ENCODE measurements at regions of chr5 and their contacts with region 1.

Region 1: GRCh38 chr5:119541716-119542115 is 87.6 kb upstream of the FAM170A start:
- DNase-seq: no peak
- ATAC-seq: no peak
- H3K4me3 ChIP-seq: no peak overlapping the region
- H3K27ac ChIP-seq: no peak overlapping the region
- H3K4me1 ChIP-seq: peaks cover 12% of the 10 kb centered on the region
- H3K27me3 ChIP-seq: no peaks in the 10 kb centered on the region
- CTCF ChIP-seq: no peak
- EP300 ChIP-seq: no peak
- POLR2A ChIP-seq: no peak
- RAD21 ChIP-seq: no peak

Region 2: GRCh38 chr5:119554597-119554996 is 12.9 kb after region 1 on chr5:
- CTCF ChIA-PET with region 1: no interaction called
- POLR2A ChIA-PET with region 1: no interaction called
- RAD21 ChIA-PET with region 1: no interaction called
- SMC1A ChIA-PET with region 1: interaction called, 10 read pairs
- in situ Hi-C with region 1: no loop called
- intact Hi-C with region 1: no loop called
- DNase-seq: no peak
- ATAC-seq: no peak
- H3K4me3 ChIP-seq: no peak overlapping the region
- H3K27ac ChIP-seq: no peak overlapping the region
- H3K4me1 ChIP-seq: no peaks in the 10 kb centered on the region
- H3K27me3 ChIP-seq: no peaks in the 10 kb centered on the region
- CTCF ChIP-seq: no peak
- EP300 ChIP-seq: no peak
- POLR2A ChIP-seq: no peak
- RAD21 ChIP-seq: no peak

Region 3: DNA sequence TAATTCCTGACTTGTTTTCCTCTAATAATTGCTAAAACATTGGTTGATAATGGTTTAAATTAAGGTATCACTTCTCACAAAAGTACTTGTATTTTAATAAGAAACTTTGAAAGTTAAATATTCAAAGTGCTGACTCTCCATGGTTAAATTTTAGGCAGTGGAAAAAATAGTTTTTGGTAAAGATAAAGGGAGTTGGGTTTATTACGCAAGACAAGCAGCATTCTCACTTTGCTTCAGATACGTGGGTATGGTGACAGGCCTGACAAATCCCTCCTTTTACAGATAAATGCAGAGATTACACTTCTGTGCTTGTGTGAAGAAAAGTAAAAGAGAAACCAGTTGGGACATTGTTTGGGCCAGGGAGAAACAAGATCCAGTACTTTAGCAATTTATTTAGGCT is 73.1 kb after region 1 on chr5:
- CTCF ChIA-PET with region 1: no interaction called
- POLR2A ChIA-PET with region 1: no interaction called
- RAD21 ChIA-PET with region 1: no interaction called
- SMC1A ChIA-PET with region 1: no interaction called
- in situ Hi-C with region 1: no loop called
- intact Hi-C with region 1: no loop called
- DNase-seq: no peak
- ATAC-seq: no peak
- H3K4me3 ChIP-seq: no peak overlapping the region
- H3K27ac ChIP-seq: no peak overlapping the region
- H3K4me1 ChIP-seq: no peaks in the 10 kb centered on the region
- H3K27me3 ChIP-seq: no peaks in the 10 kb centered on the region; a peak in 1 of 4 replicates
- CTCF ChIP-seq: no peak
- EP300 ChIP-seq: no peak
- POLR2A ChIP-seq: no peak
- RAD21 ChIP-seq: no peak

Measured in GM12878 (cell line).